ENCODE measurements at regions of chr18 and their contacts with region 1.

Region 1: GRCh38 chr18:63518178-63519012 is 23.8 kb upstream of the SERPINB12 start:
- DNase-seq: peak; percentile 77 to 78
- H3K4me3 ChIP-seq: no peak overlapping the region
- H3K4me1 ChIP-seq: no peaks in the 10 kb centered on the region
- H3K27me3 ChIP-seq: peaks cover 16% of the 10 kb centered on the region

Region 2: GRCh38 chr18:63216516-63217311 is 301.7 kb before region 1 on chr18:
- in situ Hi-C with region 1: no loop called
- DNase-seq: no peak
- H3K4me3 ChIP-seq: no peak overlapping the region
- H3K4me1 ChIP-seq: no peaks in the 10 kb centered on the region
- H3K27me3 ChIP-seq: no peaks in the 10 kb centered on the region

Region 3: GRCh38 chr18:63588890-63589289 is 70.5 kb after region 1 on chr18:
- in situ Hi-C with region 1: loop called (anchors 10 kb)
- DNase-seq: no peak
- H3K4me3 ChIP-seq: no peak overlapping the region
- H3K4me1 ChIP-seq: no peaks in the 10 kb centered on the region; the same call in 1 of the 2 replicates
- H3K27me3 ChIP-seq: no peaks in the 10 kb centered on the region

Region 4: GRCh38 chr18:63848159-63848558 is 329.8 kb after region 1 on chr18:
- in situ Hi-C with region 1: loop called (anchors 10 kb)
- DNase-seq: peak; percentile 10 to 59
- H3K4me3 ChIP-seq: no peak overlapping the region
- H3K4me1 ChIP-seq: no peaks in the 10 kb centered on the region
- H3K27me3 ChIP-seq: peaks cover 11% of the 10 kb centered on the region